Transverse colon (tissue), 4 donors: ENCODE measurements at regions of chr1 and their contacts with region 1.

Region 1: DNA sequence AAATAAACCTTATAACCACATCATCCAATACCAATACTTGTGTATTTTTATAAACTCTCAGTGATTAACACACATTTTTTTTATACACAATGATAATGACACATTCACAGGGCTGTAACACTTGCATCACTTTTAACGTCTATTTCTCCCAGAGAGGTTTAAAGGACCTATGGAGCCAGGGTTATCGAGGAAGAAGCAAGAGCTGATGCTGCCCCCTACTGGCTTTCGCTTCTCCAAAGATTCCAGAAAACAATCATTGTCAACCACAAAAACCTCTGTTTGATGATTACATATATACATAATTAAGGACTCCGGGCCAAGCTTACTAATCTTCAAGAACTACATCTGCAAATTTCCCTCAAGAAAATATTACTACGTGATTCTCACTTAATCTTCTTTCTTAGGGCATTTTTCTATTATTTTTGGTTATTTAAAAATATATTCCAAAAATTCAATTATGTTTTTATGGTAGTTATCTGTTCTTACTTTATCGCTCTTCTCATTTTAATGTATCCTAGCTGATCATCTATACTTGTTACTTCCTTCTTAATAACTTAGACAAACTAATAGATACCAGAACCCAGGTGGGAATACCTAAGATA is 214.5 kb downstream of the VAV3 start:
- DNase-seq: peak; percentile 80
- H3K4me3 ChIP-seq: no peak overlapping the region
- H3K27ac ChIP-seq: no peak overlapping the region
- H3K4me1 ChIP-seq: no peaks in the 10 kb centered on the region
- H3K27me3 ChIP-seq: no peaks in the 10 kb centered on the region
- CTCF ChIP-seq: peak; percentile 61 to 77 (median 68)
- EP300 ChIP-seq: no peak
- POLR2A ChIP-seq: no peak

Region 2: DNA sequence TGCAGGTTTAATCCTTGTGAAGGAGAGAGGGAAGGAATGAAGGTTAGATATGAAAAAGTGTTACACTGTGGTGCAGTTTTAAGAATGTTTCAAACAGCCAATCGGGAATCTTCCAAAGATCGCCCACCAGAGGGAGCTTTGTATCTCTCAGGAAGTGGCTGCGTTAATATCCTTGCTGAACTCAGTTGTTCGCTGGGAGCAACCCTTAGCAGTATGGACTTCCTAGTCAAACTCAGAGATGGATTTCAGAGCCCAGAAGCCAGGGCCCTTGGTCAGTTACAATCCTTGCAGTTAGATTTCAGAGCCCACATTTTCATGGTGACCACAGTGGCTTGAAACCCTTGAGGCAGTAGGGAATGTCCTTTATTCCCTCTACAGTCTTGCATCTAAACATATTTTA is 473.4 kb before region 1 on chr1:
- in situ Hi-C with region 1: loop called in 1 of 4 experiments (anchors 25 kb)
- intact Hi-C with region 1: no loop called
- DNase-seq: peak; percentile 46
- H3K4me3 ChIP-seq: no peak overlapping the region
- H3K27ac ChIP-seq: no peak overlapping the region
- H3K4me1 ChIP-seq: no peaks in the 10 kb centered on the region
- H3K27me3 ChIP-seq: no peaks in the 10 kb centered on the region
- CTCF ChIP-seq: peak; percentile 27 to 48 (median 39)
- EP300 ChIP-seq: no peak
- POLR2A ChIP-seq: no peak

Region 3: GRCh38 chr1:107430540-107431228 is 319.8 kb before region 1 on chr1:
- in situ Hi-C with region 1: loop called in 3 of 4 experiments (anchors 25 kb)
- intact Hi-C with region 1: no loop called
- DNase-seq: peak; percentile 45
- H3K4me3 ChIP-seq: no peak overlapping the region
- H3K27ac ChIP-seq: no peak overlapping the region
- H3K4me1 ChIP-seq: peaks cover 0 to 6% (median 0%) of the 10 kb centered on the region in 4 donors
- H3K27me3 ChIP-seq: no peaks in the 10 kb centered on the region
- CTCF ChIP-seq: peak; percentile 54 to 77 (median 64)
- EP300 ChIP-seq: no peak
- POLR2A ChIP-seq: no peak

Region 4: DNA sequence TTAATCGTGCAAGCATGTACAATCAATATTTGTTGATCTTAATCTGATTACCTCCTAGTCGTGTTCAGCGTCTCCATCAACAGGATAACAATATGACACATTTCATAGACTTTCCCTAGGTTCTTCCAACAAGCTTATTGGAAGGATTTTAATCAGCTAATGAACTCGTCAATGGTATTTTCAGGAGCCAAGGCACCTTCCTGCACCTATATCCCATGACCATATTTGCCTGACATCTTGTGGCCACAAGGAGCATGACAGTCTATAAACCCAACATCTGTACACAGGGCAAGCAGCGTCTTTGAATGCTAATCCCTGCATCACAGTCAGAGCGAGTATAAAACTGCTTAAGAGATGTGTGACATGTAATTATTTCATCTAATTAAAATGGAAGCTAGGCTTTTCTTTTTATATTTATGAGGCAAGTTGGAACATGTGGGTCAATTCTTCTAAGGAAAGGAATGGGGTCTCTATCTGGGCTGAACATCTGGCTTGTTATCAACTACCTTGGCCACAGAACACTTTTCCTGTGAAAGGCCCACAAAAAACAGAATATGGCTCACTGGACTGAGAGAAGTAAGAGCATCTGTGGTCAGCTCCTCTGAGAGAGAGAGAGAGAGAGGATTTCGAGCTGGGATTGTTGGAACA is 220.8 kb before region 1 on chr1:
- in situ Hi-C with region 1: loop called in 2 of 4 experiments (anchors 10 to 25 kb)
- intact Hi-C with region 1: no loop called
- DNase-seq: peak; percentile 19
- H3K4me3 ChIP-seq: no peak overlapping the region
- H3K27ac ChIP-seq: peak overlapping the region in 1 of 4 donors; percentile 15
- H3K4me1 ChIP-seq: peaks cover under 1 to 5% (median under 1%) of the 10 kb centered on the region in 4 donors
- H3K27me3 ChIP-seq: no peaks in the 10 kb centered on the region
- CTCF ChIP-seq: peak; percentile 73 to 85 (median 77)
- EP300 ChIP-seq: no peak
- POLR2A ChIP-seq: no peak

Region 5: GRCh38 chr1:107555578-107555977 is 194.9 kb before region 1 on chr1:
- in situ Hi-C with region 1: no loop called
- intact Hi-C with region 1: no loop called
- DNase-seq: no peak
- H3K4me3 ChIP-seq: no peak overlapping the region
- H3K27ac ChIP-seq: no peak overlapping the region
- H3K4me1 ChIP-seq: no peaks in the 10 kb centered on the region
- H3K27me3 ChIP-seq: no peaks in the 10 kb centered on the region
- CTCF ChIP-seq: no peak
- EP300 ChIP-seq: no peak
- POLR2A ChIP-seq: no peak

Region 6: DNA sequence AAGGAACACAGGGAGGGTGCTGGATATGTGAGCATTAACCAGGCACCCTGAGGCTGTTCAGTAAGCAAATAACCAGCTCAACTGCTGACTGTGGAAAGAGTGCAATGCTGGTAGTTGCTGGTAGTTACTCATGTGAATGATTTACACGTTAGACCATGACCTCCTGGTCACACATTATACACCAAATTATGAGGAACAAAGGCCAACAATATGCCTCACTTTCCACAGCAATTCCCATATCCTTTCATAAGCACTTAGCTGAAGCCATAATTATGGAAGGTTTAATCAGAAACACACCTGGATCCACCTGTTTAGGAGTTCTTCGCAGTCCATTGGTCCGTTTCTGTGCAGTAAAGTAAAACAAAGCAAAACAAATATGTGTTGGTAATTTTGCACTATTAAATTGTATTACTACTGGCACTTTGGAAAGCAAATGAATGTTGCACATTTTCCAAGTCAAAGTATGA is 67.2 kb before region 1 on chr1:
- in situ Hi-C with region 1: no loop called
- intact Hi-C with region 1: no loop called
- DNase-seq: peak; percentile 63
- H3K4me3 ChIP-seq: peak overlapping the region in 1 of 4 donors; percentile 24
- H3K27ac ChIP-seq: peak overlapping the region; percentile 78 to 85 (median 83)
- H3K4me1 ChIP-seq: peaks cover 0 to 60% (median 31%) of the 10 kb centered on the region in 4 donors
- H3K27me3 ChIP-seq: no peaks in the 10 kb centered on the region
- CTCF ChIP-seq: no peak
- EP300 ChIP-seq: no peak
- POLR2A ChIP-seq: peak; percentile 49